ENCODE measurements at regions of chr9 and their contacts with region 1.

Region 1: DNA sequence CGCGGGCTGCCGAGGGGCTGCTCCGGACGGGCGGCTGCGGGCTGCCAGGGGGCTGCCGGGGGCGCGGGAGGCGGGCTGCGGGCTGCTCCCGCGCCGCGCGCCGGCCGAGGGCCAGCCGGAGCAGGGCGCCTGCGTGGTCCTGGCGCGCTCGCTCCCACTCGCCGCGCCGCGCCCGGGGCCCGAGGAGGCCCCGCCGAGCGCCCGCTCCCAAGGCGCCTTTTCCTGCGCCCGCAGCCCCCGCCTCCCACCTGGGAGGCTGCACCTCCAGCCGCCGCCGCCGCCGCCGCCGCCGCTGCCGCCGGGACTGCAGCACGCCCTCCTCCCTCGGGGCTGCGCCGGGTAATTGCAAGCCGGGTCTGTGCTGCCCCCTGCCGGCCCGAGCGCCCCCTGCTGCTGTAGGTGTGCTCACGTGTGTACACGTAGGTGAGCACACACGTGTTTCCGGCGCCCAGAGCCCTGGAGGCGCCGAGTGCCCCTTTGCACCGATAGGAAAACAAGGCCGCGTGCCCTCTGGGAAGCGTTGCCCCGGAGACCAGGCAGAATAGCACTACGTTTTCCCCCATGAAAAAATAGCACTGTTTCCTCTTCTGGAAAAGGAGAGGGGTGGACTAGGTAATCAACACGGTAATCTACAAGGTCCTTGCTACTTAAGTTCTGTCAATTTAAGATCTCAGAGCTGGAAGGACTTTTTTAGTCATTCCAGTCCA is at the start of gene EPB41L4B:
- DNase-seq: peak; percentile 86
- H3K4me3 ChIP-seq: peak within 1 kb of the TSS; percentile 48 to 79 (median 55)
- H3K27ac ChIP-seq: peak within 1 kb of the TSS; percentile 51
- H3K4me1 ChIP-seq: peaks cover 45% of the 10 kb centered on the region
- H3K27me3 ChIP-seq: no peaks in the 10 kb centered on the region
- CTCF ChIP-seq: peak; percentile 75 to 90
- total RNA-seq, gene EPB41L4B: 3.5 to 4.8 TPM

Region 2: GRCh38 chr9:108850293-108850897 is 470.5 kb before region 1 on chr9:
- CTCF ChIA-PET with region 1: no interaction called
- dilution Hi-C with region 1: no loop called
- in situ Hi-C with region 1: no loop called
- intact Hi-C with region 1: loop called (anchors 2 kb)
- DNase-seq: peak; percentile 37
- H3K4me3 ChIP-seq: no peak overlapping the region
- H3K27ac ChIP-seq: no peak overlapping the region
- H3K4me1 ChIP-seq: peaks cover 2% of the 10 kb centered on the region
- H3K27me3 ChIP-seq: no peaks in the 10 kb centered on the region
- CTCF ChIP-seq: peak; percentile 54 to 76

Region 3: DNA sequence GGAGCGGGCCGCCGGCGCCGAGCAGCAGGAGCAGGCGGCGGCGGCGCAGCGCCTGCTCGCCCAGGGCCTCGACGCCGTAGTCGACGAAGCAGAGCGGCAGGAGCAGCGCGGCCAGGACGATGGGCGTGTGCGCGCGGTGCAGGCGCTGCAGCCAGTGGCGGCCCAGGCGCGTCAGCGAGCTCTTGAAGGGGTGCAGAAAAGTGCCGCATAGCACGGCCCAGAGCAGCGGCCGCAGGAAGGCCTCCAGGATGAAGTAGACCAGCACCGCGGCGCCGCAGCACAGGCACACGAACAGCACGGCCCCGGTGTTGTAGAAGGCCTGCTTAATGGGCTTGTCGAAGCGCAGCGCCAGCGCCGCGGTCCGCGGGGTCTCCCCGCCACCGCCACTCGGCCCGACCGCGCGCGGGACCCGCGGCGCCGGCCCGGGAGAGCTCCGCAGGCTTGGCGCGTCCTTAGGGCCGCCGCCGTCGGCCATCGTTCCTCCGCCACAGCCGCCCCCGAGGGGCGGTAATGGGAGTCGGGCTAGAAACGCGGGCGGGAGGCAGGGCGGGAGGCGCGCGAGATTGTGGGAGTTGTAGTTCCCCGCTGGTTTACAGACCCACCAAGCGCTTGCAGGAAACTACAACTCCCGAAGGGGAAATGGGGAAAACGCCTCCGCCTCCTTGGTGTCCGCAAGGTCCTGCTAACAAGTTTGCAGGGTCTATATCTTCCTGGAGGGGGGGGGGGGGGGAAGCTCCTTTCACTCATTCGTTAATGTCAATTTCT is 201.3 kb before region 1 on chr9 and contains the start of gene TMEM245:
- CTCF ChIA-PET with region 1: no interaction called
- dilution Hi-C with region 1: no loop called
- in situ Hi-C with region 1: loop called in 1 of 2 experiments (anchors 10 kb)
- intact Hi-C with region 1: loop called (anchors 5 kb)
- DNase-seq: peak; percentile 99
- H3K4me3 ChIP-seq: peak within 1 kb of the TSS; percentile 70 to 91 (median 89)
- H3K27ac ChIP-seq: peak within 1 kb of the TSS; percentile 46
- H3K4me1 ChIP-seq: peaks cover 15% of the 10 kb centered on the region
- H3K27me3 ChIP-seq: no peaks in the 10 kb centered on the region
- CTCF ChIP-seq: no peak
- total RNA-seq, gene TMEM245: 33.1 to 70.3 TPM

Region 4: GRCh38 chr9:109232449-109233237 is 88.3 kb before region 1 on chr9:
- CTCF ChIA-PET with region 1: interaction called, 9 read pairs
- dilution Hi-C with region 1: no loop called
- in situ Hi-C with region 1: no loop called
- intact Hi-C with region 1: loop called (anchors 1 kb)
- DNase-seq: peak; percentile 92
- H3K4me3 ChIP-seq: no peak overlapping the region
- H3K27ac ChIP-seq: peak overlapping the region; percentile 66
- H3K4me1 ChIP-seq: peaks cover 23% of the 10 kb centered on the region
- H3K27me3 ChIP-seq: no peaks in the 10 kb centered on the region
- CTCF ChIP-seq: no peak

Region 5: GRCh38 chr9:109297899-109298298 is 23.0 kb before region 1 on chr9:
- CTCF ChIA-PET with region 1: no interaction called
- dilution Hi-C with region 1: no loop called
- in situ Hi-C with region 1: no loop called
- intact Hi-C with region 1: loop called (anchors 1 kb)
- DNase-seq: peak; percentile 97
- H3K4me3 ChIP-seq: no peak overlapping the region
- H3K27ac ChIP-seq: no peak overlapping the region
- H3K4me1 ChIP-seq: peaks cover 6% of the 10 kb centered on the region
- H3K27me3 ChIP-seq: peaks cover 15% of the 10 kb centered on the region
- CTCF ChIP-seq: no peak

Region 6: GRCh38 chr9:109477258-109478050 is 156.6 kb after region 1 on chr9:
- CTCF ChIA-PET with region 1: no interaction called
- dilution Hi-C with region 1: no loop called
- in situ Hi-C with region 1: no loop called
- intact Hi-C with region 1: no loop called
- DNase-seq: peak; percentile 44
- H3K4me3 ChIP-seq: no peak overlapping the region
- H3K27ac ChIP-seq: peak overlapping the region; percentile 10
- H3K4me1 ChIP-seq: peaks cover 26% of the 10 kb centered on the region
- H3K27me3 ChIP-seq: no peaks in the 10 kb centered on the region
- CTCF ChIP-seq: no peak

Region 7: GRCh38 chr9:109520478-109521132 is 199.7 kb after region 1 on chr9:
- CTCF ChIA-PET with region 1: no interaction called
- dilution Hi-C with region 1: no loop called
- in situ Hi-C with region 1: no loop called
- intact Hi-C with region 1: loop called (anchors 1 kb)
- DNase-seq: peak; percentile 81
- H3K4me3 ChIP-seq: no peak overlapping the region
- H3K27ac ChIP-seq: peak overlapping the region; percentile 9
- H3K4me1 ChIP-seq: peaks cover 11% of the 10 kb centered on the region
- H3K27me3 ChIP-seq: no peaks in the 10 kb centered on the region
- CTCF ChIP-seq: peak; percentile 93 to 98